A673 (cell line): ENCODE measurements at regions of chr9 and their contacts with region 1.

Region 1: DNA sequence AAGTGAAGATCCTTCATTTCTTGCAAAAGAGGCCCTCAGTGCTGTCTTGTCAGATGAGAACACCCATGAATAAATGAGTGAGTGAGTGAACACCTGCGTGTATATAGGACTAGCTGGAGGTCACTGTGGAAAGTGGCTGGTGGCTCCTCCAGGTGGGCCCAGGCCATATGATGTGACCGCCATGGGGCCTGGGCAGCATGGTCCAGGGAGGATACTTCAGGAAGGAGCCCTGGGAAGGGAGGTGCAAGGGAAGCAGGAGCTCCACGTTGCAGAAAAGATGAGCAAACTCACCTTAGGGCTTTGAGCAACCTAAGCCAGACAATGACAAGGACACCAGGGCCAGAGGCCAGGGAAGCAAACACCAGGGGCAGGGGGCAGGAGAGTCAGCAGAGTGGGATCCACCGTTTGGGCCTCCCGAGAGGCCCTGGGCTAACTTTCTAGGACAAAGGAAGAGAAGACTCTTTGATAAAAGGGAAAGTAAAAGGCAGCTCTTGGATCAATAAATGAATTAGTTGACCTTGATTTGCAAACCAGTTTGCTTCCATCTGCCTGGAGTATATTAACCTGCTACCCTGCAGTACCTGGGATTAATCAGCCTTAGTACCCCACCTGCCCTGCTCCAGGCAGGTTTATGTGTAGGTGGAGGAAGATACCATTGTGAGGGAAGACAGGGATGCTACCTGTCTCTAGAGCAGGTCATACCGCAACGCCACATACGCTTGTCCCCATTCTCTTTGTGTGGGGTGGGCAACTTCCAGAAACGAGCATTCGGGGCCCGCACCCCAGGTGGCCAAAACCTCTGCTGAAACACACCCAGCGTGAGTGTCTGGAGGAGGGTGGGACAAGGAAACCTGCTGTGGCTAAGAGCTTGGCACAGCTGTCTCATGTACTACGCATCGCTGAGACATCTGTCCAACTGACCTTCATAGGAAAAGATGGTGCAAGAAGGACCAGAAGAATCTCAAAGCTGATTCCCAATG is 51.4 kb upstream of the OLFM1 start:
- DNase-seq: no peak
- H3K4me3 ChIP-seq: no peak overlapping the region
- H3K27ac ChIP-seq: no peak overlapping the region
- H3K4me1 ChIP-seq: peaks cover 19% of the 10 kb centered on the region
- H3K27me3 ChIP-seq: no peaks in the 10 kb centered on the region
- CTCF ChIP-seq: no peak

Region 2: GRCh38 chr9:134243778-134244467 is 792.1 kb before region 1 on chr9:
- CTCF ChIA-PET with region 1: no interaction called
- POLR2A ChIA-PET with region 1: no interaction called
- intact Hi-C with region 1: no loop called
- DNase-seq: no peak
- H3K4me3 ChIP-seq: no peak overlapping the region
- H3K27ac ChIP-seq: no peak overlapping the region
- H3K4me1 ChIP-seq: no peaks in the 10 kb centered on the region
- H3K27me3 ChIP-seq: peaks cover 6% of the 10 kb centered on the region
- CTCF ChIP-seq: no peak

Region 3: DNA sequence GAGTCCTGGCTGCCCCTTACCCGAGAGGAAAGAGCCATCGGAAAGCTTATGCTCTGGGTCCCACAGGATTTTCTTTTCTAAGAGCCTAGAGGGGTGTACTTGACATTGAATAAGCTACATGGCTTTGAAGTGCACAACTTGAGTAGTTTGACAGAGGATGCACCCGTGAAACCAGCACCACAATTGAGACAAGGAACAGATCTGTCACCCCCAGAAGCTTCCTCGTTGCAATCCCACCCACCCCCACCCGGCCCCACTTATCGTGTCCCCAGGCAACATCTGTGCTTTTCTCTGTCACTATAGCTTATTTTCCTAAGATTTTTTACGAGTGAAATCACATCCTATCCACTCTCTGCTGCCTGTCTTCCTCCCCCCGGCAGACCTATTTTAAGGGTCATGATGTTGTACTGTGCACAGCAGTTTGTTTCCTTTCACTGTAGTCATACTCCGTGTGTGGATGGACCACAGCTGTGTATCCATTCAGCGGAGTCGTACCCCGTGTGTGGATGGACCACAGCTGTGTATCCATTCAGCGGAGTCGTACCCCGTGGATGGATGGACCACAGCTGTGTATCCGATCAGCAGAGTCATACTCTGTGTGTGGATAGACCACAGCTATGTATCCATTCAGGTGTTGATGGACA is 164.3 kb before region 1 on chr9:
- CTCF ChIA-PET with region 1: no interaction called
- POLR2A ChIA-PET with region 1: interaction called, 11 read pairs
- intact Hi-C with region 1: no loop called
- DNase-seq: no peak
- H3K4me3 ChIP-seq: no peak overlapping the region
- H3K27ac ChIP-seq: no peak overlapping the region
- H3K4me1 ChIP-seq: no peaks in the 10 kb centered on the region
- H3K27me3 ChIP-seq: no peaks in the 10 kb centered on the region
- CTCF ChIP-seq: no peak

Region 4: GRCh38 chr9:135474915-135475314 is 438.8 kb after region 1 on chr9:
- CTCF ChIA-PET with region 1: no interaction called
- POLR2A ChIA-PET with region 1: no interaction called
- intact Hi-C with region 1: no loop called
- DNase-seq: peak; percentile 81
- H3K4me3 ChIP-seq: no peak overlapping the region
- H3K27ac ChIP-seq: no peak overlapping the region
- H3K4me1 ChIP-seq: no peaks in the 10 kb centered on the region
- H3K27me3 ChIP-seq: no peaks in the 10 kb centered on the region
- CTCF ChIP-seq: peak; percentile 73

Region 5: GRCh38 chr9:135500525-135501358 is 464.7 kb after region 1 on chr9 and contains the start of gene MRPS2:
- CTCF ChIA-PET with region 1: no interaction called
- POLR2A ChIA-PET with region 1: no interaction called
- intact Hi-C with region 1: no loop called
- DNase-seq: peak; percentile 93
- H3K4me3 ChIP-seq: peak within 1 kb of the TSS; percentile 100
- H3K27ac ChIP-seq: peak within 1 kb of the TSS; percentile 94
- H3K4me1 ChIP-seq: peaks cover 12% of the 10 kb centered on the region
- H3K27me3 ChIP-seq: no peaks in the 10 kb centered on the region
- CTCF ChIP-seq: peak; percentile 88
- total RNA-seq, gene MRPS2: 83.2 and 88.8 TPM in 2 replicates